PC-9 (cell line): ENCODE measurements at regions of chr10 and their contacts with region 1.

Region 1: GRCh38 chr10:72331601-72332422 is 22.9 kb downstream of the DNAJB12 start:
- DNase-seq: peak; percentile 95 to 99
- H3K4me3 ChIP-seq: peak overlapping the region; percentile 36; the same call in 1 of the 2 replicates
- H3K27ac ChIP-seq: peak overlapping the region; percentile 95
- H3K4me1 ChIP-seq: peaks cover 64% of the 10 kb centered on the region
- H3K27me3 ChIP-seq: no peaks in the 10 kb centered on the region
- CTCF ChIP-seq: peak; percentile 44

Region 2: DNA sequence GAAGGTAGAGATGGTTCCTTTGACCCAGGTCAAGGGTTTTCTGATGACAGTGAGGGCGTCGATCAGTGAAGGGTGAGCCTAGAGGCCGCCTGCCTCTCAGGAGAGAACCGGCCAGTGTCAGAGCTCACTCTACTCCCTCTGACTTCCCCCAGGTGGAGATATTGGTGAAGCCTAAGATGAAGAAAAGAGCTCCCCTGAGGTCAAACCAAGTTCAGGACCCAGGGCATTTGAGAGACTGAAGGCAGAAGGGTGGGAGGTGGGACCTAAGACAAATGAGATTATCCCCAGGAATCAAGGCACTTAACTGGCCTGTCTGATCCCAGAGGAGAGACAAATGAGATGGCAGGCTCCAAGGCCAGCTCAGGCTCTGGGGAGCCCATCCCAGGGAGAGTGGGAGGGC is 830.4 kb before region 1 on chr10:
- CTCF ChIA-PET with region 1: no interaction called
- POLR2A ChIA-PET with region 1: interaction called, 18 read pairs
- intact Hi-C with region 1: no loop called
- DNase-seq: no peak
- H3K4me3 ChIP-seq: no peak overlapping the region
- H3K27ac ChIP-seq: no peak overlapping the region
- H3K4me1 ChIP-seq: no peaks in the 10 kb centered on the region
- H3K27me3 ChIP-seq: no peaks in the 10 kb centered on the region
- CTCF ChIP-seq: no peak

Region 3: GRCh38 chr10:71999360-72000072 is 332.3 kb before region 1 on chr10:
- CTCF ChIA-PET with region 1: no interaction called
- POLR2A ChIA-PET with region 1: interaction called, 11 read pairs
- intact Hi-C with region 1: no loop called
- DNase-seq: no peak
- H3K4me3 ChIP-seq: no peak overlapping the region
- H3K27ac ChIP-seq: peak overlapping the region; percentile 69
- H3K4me1 ChIP-seq: peaks cover 29% of the 10 kb centered on the region
- H3K27me3 ChIP-seq: no peaks in the 10 kb centered on the region
- CTCF ChIP-seq: no peak

Region 4: GRCh38 chr10:72173635-72174296 is 158.0 kb before region 1 on chr10:
- CTCF ChIA-PET with region 1: no interaction called
- POLR2A ChIA-PET with region 1: no interaction called
- intact Hi-C with region 1: loop called (anchors 2 kb)
- DNase-seq: peak in 1 of 2 experiments; percentile 48
- H3K4me3 ChIP-seq: no peak overlapping the region
- H3K27ac ChIP-seq: peak overlapping the region; percentile 43
- H3K4me1 ChIP-seq: peaks cover 61% of the 10 kb centered on the region
- H3K27me3 ChIP-seq: no peaks in the 10 kb centered on the region
- CTCF ChIP-seq: no peak

Region 5: DNA sequence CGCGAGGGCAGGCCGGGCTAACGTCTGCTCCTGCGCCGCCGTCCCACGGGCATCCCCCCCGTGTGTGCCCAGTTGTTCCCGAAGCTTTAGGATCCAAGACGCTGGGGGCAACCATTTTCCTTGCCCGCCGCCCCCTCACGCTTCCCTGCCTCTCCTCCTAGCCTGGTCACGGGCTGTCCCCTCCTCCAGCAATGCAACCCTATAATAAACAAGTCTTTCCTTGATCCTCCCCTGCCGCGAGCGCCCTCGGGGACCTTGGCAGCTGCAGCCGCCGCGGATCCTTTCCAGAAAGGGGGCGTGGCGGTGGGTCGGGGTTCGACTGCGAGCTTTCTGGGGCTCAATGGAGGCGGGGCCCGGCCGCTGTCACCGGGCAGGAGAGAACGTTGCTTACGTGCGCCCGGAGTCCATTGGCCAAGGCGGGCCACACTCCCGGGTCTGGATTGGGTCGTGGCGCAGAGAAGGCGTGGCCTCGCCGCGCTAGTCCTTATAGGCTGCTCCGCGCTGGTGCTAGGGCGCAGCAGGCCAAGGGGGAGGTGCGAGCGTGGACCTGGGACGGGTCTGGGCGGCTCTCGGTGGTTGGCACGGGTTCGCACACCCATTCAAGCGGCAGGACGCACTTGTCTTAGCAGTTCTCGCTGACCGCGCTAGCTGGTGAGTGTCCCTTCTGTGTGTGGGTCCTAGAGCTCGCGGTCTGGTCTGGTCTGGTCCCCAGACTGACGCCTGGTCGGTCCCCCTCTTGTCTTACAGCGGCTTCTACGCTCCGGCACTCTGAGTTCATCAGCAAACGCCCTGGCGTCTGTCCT is 58.2 kb before region 1 on chr10 and contains the start of gene DDIT4:
- CTCF ChIA-PET with region 1: interaction called, 18 read pairs
- POLR2A ChIA-PET with region 1: interaction called, 9 read pairs
- intact Hi-C with region 1: loop called (anchors 1 kb)
- DNase-seq: peak; percentile 99 to 100
- H3K4me3 ChIP-seq: peak within 1 kb of the TSS; percentile 88
- H3K27ac ChIP-seq: peak within 1 kb of the TSS; percentile 99
- H3K4me1 ChIP-seq: peaks cover 46% of the 10 kb centered on the region
- H3K27me3 ChIP-seq: no peaks in the 10 kb centered on the region
- CTCF ChIP-seq: no peak
- total RNA-seq, gene DDIT4: 178 and 212 TPM in 2 replicates

Region 6: DNA sequence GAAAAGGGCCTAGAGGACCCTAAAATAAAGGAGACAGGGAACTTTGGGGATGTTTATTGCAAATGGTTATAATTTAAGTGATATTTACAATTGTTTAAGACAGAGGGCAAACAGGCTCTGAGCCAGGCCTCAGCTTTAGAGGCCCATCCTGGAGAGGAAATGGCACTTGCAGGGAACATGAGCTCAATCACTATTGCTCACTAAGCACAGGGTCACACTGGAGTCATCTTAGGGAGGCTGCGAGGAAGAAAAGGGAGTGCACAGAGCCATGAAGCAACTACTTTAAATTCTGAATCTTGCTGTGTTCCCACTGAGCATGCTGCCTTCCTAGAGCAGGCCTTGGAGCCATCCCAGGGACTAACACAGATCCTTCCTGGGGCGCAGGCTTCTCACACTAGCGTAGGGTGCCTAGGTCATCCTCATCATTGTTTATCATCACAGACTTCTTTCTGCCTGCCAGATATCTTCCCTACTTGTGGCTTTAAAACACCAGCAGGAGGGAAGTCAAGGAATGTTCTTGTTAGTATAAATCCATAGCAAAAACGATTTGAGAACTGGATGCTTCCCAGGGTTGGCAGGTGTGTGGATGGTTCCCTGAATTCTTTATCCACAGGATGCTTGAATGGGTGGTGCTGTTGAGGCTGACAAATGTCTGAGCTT is 35.6 kb after region 1 on chr10:
- CTCF ChIA-PET with region 1: no interaction called
- POLR2A ChIA-PET with region 1: no interaction called
- intact Hi-C with region 1: no loop called
- DNase-seq: no peak
- H3K4me3 ChIP-seq: no peak overlapping the region
- H3K27ac ChIP-seq: no peak overlapping the region
- H3K4me1 ChIP-seq: peaks cover 15% of the 10 kb centered on the region
- H3K27me3 ChIP-seq: no peaks in the 10 kb centered on the region
- CTCF ChIP-seq: no peak

Region 7: DNA sequence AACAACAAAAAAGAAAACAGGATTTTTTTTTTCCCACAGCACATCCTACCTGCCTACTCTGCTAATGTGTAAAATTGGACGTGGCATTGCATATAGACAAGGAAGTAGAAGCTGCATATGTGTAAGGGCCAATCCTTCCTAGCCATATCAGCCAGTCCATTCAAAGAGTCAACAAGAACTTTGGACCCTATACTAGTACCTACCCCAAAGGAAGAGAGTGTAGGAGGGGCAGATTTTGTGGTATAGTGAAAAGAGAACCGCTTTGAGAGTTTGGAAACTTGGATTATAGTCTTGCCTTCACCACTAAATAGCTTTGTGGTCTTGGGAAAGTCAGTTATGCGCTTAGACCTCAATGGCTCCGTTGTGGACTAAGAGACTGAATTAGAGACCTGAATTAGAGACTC is 348.0 kb after region 1 on chr10:
- CTCF ChIA-PET with region 1: no interaction called
- POLR2A ChIA-PET with region 1: no interaction called
- intact Hi-C with region 1: no loop called
- DNase-seq: no peak
- H3K4me3 ChIP-seq: no peak overlapping the region
- H3K27ac ChIP-seq: no peak overlapping the region
- H3K4me1 ChIP-seq: peaks cover 29% of the 10 kb centered on the region
- H3K27me3 ChIP-seq: no peaks in the 10 kb centered on the region
- CTCF ChIP-seq: no peak